PC-9 (cell line): ENCODE measurements at regions of chr7 and their contacts with region 1.

Region 1: GRCh38 chr7:138645290-138645689 is 55.9 kb downstream of the SVOPL start:
- DNase-seq: no peak
- H3K4me3 ChIP-seq: no peak overlapping the region
- H3K27ac ChIP-seq: no peak overlapping the region
- H3K4me1 ChIP-seq: peaks cover 9% of the 10 kb centered on the region; the same call in 1 of the 2 replicates
- H3K27me3 ChIP-seq: no peaks in the 10 kb centered on the region
- CTCF ChIP-seq: no peak; the same call in 1 of the 2 replicates

Region 2: GRCh38 chr7:138297526-138297925 is 347.8 kb before region 1 on chr7:
- CTCF ChIA-PET with region 1: interaction called, 10 read pairs
- POLR2A ChIA-PET with region 1: no interaction called
- intact Hi-C with region 1: no loop called
- DNase-seq: no peak
- H3K4me3 ChIP-seq: no peak overlapping the region
- H3K27ac ChIP-seq: no peak overlapping the region
- H3K4me1 ChIP-seq: 0 out of 2 replicates have a peak, but pooled peaks cover 9% of the 10 kb centered on the region
- H3K27me3 ChIP-seq: no peaks in the 10 kb centered on the region
- CTCF ChIP-seq: no peak

Region 3: GRCh38 chr7:138752568-138753518 is 107.6 kb after region 1 on chr7:
- CTCF ChIA-PET with region 1: no interaction called
- POLR2A ChIA-PET with region 1: no interaction called
- intact Hi-C with region 1: no loop called
- DNase-seq: peak; percentile 97 to 100
- H3K4me3 ChIP-seq: no peak overlapping the region
- H3K27ac ChIP-seq: peak overlapping the region; percentile 95
- H3K4me1 ChIP-seq: peaks cover 73% of the 10 kb centered on the region
- H3K27me3 ChIP-seq: no peaks in the 10 kb centered on the region
- CTCF ChIP-seq: no peak